ENCODE measurements at regions of chr1 and their contacts with region 1.

Region 1: GRCh38 chr1:154878371-154879022 is 8.4 kb upstream of the KCNN3 start:
- DNase-seq: peak; percentile 94
- ATAC-seq: peak; percentile 95
- H3K4me3 Mint-ChIP-seq: no peak overlapping the region
- H3K27ac Mint-ChIP-seq: no peak overlapping the region
- H3K4me1 Mint-ChIP-seq: no peaks in the 10 kb centered on the region
- H3K27me3 Mint-ChIP-seq: no peaks in the 10 kb centered on the region
- CTCF ChIP-seq: peak; percentile 78

Region 2: GRCh38 chr1:154558575-154559465 is 319.7 kb before region 1 on chr1 and contains the start of gene UBE2Q1:
- CTCF ChIA-PET with region 1: interaction called, 14 read pairs
- POLR2A ChIA-PET with region 1: no interaction called
- DNase-seq: peak; percentile 95
- ATAC-seq: peak; percentile 70
- H3K4me3 Mint-ChIP-seq: peak within 1 kb of the TSS; percentile 94
- H3K27ac Mint-ChIP-seq: peak within 1 kb of the TSS; percentile 89
- H3K4me1 Mint-ChIP-seq: peaks cover 28% of the 10 kb centered on the region
- H3K27me3 Mint-ChIP-seq: no peaks in the 10 kb centered on the region
- CTCF ChIP-seq: no peak
- total RNA-seq, gene UBE2Q1: 60.8 to 62.7 TPM (median 61.6 TPM) in 3 replicates

Region 3: DNA sequence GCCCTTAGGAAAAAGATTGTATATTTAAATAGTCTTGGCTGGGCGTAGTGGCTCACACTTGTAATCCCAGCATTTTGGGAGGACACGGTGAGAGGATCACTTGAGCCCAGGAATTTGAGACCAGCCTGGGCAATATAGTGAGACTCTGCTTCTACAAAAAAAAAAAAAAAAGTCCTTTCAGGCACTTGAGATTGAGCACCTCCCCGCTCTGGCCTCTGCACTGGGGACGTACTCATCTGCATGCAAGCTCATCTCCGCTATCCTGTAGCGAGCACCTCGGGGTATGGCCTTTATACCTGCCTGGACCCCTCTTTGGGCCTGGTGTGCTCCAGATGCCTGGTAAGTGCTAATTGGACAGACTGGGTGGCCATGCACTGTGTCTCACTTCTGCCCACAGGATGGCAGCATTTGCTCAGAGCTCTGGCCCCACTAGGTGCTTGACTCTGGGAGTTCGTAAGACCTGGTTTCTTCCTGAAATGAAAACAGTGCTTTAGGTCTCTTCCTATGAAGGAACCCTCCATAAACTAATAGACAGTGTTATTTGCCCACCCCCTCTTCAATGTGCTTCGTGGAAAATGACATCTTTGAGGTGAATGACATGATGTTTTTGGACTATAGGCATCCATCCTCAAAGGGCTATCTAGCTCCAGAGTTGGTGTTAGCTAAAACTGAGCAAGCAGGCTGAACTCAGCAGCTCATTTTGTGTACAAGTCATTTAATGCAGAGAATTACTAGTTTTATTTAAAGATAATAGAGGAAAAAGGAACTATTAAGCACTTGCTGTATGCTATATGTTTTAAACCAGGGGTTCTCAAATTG is 208.8 kb before region 1 on chr1:
- CTCF ChIA-PET with region 1: interaction called, 25 read pairs
- POLR2A ChIA-PET with region 1: no interaction called
- DNase-seq: peak; percentile 80
- ATAC-seq: peak; percentile 100
- H3K4me3 Mint-ChIP-seq: no peak overlapping the region
- H3K27ac Mint-ChIP-seq: no peak overlapping the region
- H3K4me1 Mint-ChIP-seq: peaks cover 26% of the 10 kb centered on the region
- H3K27me3 Mint-ChIP-seq: peaks cover 2% of the 10 kb centered on the region; the same call in 1 of the 2 replicates
- CTCF ChIP-seq: no peak

Region 4: GRCh38 chr1:154760469-154760933 is 118.0 kb before region 1 on chr1:
- CTCF ChIA-PET with region 1: interaction called, 23 read pairs
- POLR2A ChIA-PET with region 1: no interaction called
- DNase-seq: peak; percentile 87
- ATAC-seq: peak; percentile 96
- H3K4me3 Mint-ChIP-seq: peak overlapping the region; percentile 48
- H3K27ac Mint-ChIP-seq: no peak overlapping the region
- H3K4me1 Mint-ChIP-seq: no peaks in the 10 kb centered on the region
- H3K27me3 Mint-ChIP-seq: peaks cover 24% of the 10 kb centered on the region
- CTCF ChIP-seq: peak; percentile 66

Region 5: DNA sequence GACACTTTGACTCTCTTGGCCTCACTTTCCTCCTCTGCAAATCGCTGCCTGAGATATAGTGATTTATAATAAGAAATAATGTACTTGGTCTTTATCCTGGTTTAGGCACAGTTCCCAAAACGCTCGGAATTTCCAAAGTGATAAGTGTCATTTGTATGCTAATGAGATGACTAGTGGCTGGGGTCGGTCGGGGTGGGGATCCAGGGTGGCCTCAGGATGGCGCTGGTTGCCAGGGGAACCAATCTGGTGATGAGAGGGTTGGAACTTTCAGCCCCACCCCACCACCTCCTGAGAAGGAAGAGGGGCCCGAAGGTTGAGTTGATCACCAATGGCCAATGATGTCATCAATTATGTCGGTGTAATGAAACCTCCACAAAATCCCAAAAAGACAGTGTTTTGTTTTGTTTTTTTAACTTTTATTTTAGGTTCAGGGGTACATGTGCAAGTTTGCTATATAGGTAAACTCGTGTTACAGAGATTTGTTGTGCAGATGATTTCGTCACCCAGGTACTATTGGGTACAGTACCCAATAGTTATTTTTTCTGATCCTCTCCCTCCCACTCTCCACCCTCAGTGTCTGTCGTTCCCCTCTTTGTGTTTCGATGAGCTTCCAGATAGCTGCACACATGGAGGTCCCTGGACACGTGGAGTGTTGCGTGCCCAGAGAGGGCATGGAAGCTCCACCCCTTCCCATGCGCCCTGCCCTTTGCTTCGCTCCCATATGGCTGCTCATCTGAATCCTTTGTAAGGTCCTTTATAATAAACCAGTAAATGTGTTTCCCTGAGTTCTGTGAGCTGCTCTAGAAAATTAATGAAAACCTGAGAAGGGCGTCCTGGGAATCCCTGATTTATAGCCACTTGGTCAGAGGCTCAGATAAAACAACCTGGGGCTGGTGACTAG is 105.6 kb before region 1 on chr1:
- CTCF ChIA-PET with region 1: interaction called, 19 read pairs
- POLR2A ChIA-PET with region 1: no interaction called
- DNase-seq: peak; percentile 76
- ATAC-seq: peak; percentile 95
- H3K4me3 Mint-ChIP-seq: no peak overlapping the region
- H3K27ac Mint-ChIP-seq: peak overlapping the region; percentile 75; the same call in 1 of the 2 replicates
- H3K4me1 Mint-ChIP-seq: peaks cover 25% of the 10 kb centered on the region
- H3K27me3 Mint-ChIP-seq: no peaks in the 10 kb centered on the region
- CTCF ChIP-seq: no peak

Region 6: GRCh38 chr1:154819628-154820590 is 58.6 kb before region 1 on chr1:
- CTCF ChIA-PET with region 1: interaction called, 20 read pairs
- POLR2A ChIA-PET with region 1: no interaction called
- DNase-seq: peak; percentile 66
- ATAC-seq: peak; percentile 97
- H3K4me3 Mint-ChIP-seq: no peak overlapping the region
- H3K27ac Mint-ChIP-seq: no peak overlapping the region
- H3K4me1 Mint-ChIP-seq: peaks cover 13% of the 10 kb centered on the region
- H3K27me3 Mint-ChIP-seq: no peaks in the 10 kb centered on the region
- CTCF ChIP-seq: peak; percentile 63

Region 7: DNA sequence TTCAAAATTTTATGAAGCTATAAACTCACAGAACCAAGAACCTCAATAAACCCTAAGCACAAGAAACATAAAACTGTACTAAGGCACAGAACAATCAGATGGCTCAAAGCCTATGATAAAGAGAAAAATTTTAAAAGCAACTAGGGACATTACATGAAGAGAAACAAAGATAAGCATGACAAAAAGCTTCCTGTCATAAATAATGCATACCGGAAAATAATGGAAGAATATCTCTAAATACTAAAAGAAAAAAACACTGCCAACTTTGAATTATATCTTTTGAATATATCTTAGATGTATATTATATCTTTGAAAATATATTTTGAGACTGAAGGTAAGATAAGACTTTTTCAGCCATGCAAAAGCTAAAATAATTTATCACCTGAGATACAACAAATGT is 13.0 kb after region 1 on chr1:
- CTCF ChIA-PET with region 1: interaction called, 13 read pairs
- POLR2A ChIA-PET with region 1: no interaction called
- DNase-seq: no peak
- ATAC-seq: no peak
- H3K4me3 Mint-ChIP-seq: no peak overlapping the region
- H3K27ac Mint-ChIP-seq: no peak overlapping the region
- H3K4me1 Mint-ChIP-seq: peaks cover 5% of the 10 kb centered on the region
- H3K27me3 Mint-ChIP-seq: peaks cover 4% of the 10 kb centered on the region; the same call in 1 of the 2 replicates
- CTCF ChIP-seq: no peak

Region 8: GRCh38 chr1:154955718-154956543 is 77.4 kb after region 1 on chr1 and contains the start of gene PBXIP1:
- CTCF ChIA-PET with region 1: no interaction called
- POLR2A ChIA-PET with region 1: no interaction called
- DNase-seq: peak; percentile 85
- ATAC-seq: peak; percentile 87
- H3K4me3 Mint-ChIP-seq: peak within 1 kb of the TSS; percentile 97
- H3K27ac Mint-ChIP-seq: peak within 1 kb of the TSS; percentile 99
- H3K4me1 Mint-ChIP-seq: peaks cover 53% of the 10 kb centered on the region
- H3K27me3 Mint-ChIP-seq: no peaks in the 10 kb centered on the region
- CTCF ChIP-seq: no peak
- total RNA-seq, gene PBXIP1: 26.5 to 30.7 TPM (median 28.4 TPM) in 3 replicates

Region 9: DNA sequence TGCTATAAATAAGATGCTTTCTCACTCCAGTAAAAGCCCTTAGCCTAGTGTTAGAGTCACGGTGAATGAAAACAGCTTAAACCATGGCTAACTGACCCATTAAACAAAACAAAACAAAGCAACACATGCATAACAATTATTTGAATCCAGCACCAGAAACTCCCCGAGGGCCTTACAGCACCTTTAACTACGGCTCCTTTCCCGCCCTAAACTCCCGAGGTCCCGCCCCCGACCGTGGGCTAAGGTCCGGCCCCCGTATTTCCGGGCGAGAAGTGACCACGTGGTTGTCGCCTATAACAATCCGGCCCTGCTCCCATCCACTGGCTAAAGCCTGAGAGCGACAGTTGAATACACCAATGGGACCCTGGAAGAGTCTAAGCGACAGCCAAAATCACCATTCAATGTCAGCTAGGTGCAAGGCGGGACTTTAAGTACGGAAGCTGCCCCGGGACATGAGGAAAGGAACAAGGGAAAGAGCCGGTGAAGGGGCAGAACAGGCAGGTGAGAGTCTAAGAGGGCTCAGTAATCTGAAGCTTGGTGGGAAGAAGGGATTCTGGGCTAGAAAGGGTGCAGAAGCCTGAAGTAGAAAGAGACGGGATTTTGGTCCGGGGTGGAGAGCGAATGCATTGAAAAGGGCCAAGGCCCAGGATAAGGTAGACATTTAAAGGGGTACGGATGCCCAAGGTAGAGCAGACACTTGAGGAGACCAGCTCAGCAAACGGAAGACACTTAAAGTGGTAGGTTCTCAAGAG is 104.6 kb after region 1 on chr1 and contains the start of gene FLAD1:
- CTCF ChIA-PET with region 1: no interaction called
- POLR2A ChIA-PET with region 1: no interaction called
- DNase-seq: peak; percentile 98
- ATAC-seq: peak; percentile 99
- H3K4me3 Mint-ChIP-seq: no peak within 1 kb of the TSS
- H3K27ac Mint-ChIP-seq: peak within 1 kb of the TSS; percentile 70; the same call in 1 of the 2 replicates
- H3K4me1 Mint-ChIP-seq: peaks cover 10% of the 10 kb centered on the region
- H3K27me3 Mint-ChIP-seq: no peaks in the 10 kb centered on the region
- CTCF ChIP-seq: no peak
- total RNA-seq, gene FLAD1: 71.1 to 88.3 TPM (median 71.2 TPM) in 3 replicates

Region 10: GRCh38 chr1:154999571-155000410 is 121.3 kb after region 1 on chr1:
- CTCF ChIA-PET with region 1: no interaction called
- POLR2A ChIA-PET with region 1: no interaction called
- DNase-seq: peak; percentile 77
- ATAC-seq: no peak
- H3K4me3 Mint-ChIP-seq: peak overlapping the region; percentile 88
- H3K27ac Mint-ChIP-seq: peak overlapping the region; percentile 99
- H3K4me1 Mint-ChIP-seq: peaks cover 25% of the 10 kb centered on the region
- H3K27me3 Mint-ChIP-seq: no peaks in the 10 kb centered on the region; the same call in 1 of the 2 replicates
- CTCF ChIP-seq: no peak